Ascending aorta (tissue), 2 donors: ENCODE measurements at regions of chr16 and their contacts with region 1.

Region 1: DNA sequence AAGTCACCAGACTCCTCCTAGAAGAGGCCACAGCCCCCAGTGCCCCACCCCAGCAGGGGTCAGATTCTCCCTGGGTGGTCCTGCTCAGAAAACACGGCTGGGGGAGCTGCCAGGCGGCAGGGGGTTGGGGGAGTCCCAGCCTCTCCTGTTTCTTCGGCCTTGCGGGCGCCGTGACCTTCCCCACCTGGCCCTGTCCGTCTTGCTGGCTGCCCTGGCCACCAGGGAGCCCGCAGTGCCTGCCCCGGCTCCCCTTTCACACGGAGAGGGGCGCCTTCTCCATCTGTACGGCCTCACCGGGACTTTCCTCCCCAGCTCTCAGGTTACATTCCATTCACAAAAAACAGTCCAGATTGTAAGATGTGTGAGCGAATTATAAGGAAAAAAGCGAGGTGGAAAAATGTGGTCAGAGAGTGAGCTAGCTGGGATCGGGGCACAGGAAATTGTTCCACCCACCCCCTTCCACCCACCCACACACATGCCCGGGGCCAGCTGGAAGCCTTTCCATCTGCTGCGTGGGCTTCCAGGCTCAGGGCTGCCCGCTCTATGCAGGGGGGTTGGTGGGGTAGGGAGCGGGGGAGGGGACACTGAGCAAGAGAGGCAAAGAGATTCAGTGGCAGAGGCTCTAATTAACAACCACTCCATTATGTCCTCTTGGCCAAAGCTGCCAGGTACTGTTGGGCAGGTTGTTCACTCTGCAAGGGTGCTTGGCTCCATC is 14.6 kb upstream of the CIBAR2 start:
- DNase-seq: peak in 1 of 2 donors; percentile 90
- H3K4me3 ChIP-seq: peak overlapping the region in 1 of 2 donors; percentile 9
- H3K27ac ChIP-seq: peak overlapping the region; percentile 88 to 94
- H3K4me1 ChIP-seq: peaks cover 19 to 57% of the 10 kb centered on the region in 2 donors
- H3K27me3 ChIP-seq: no peaks in the 10 kb centered on the region
- CTCF ChIP-seq: no peak

Region 2: DNA sequence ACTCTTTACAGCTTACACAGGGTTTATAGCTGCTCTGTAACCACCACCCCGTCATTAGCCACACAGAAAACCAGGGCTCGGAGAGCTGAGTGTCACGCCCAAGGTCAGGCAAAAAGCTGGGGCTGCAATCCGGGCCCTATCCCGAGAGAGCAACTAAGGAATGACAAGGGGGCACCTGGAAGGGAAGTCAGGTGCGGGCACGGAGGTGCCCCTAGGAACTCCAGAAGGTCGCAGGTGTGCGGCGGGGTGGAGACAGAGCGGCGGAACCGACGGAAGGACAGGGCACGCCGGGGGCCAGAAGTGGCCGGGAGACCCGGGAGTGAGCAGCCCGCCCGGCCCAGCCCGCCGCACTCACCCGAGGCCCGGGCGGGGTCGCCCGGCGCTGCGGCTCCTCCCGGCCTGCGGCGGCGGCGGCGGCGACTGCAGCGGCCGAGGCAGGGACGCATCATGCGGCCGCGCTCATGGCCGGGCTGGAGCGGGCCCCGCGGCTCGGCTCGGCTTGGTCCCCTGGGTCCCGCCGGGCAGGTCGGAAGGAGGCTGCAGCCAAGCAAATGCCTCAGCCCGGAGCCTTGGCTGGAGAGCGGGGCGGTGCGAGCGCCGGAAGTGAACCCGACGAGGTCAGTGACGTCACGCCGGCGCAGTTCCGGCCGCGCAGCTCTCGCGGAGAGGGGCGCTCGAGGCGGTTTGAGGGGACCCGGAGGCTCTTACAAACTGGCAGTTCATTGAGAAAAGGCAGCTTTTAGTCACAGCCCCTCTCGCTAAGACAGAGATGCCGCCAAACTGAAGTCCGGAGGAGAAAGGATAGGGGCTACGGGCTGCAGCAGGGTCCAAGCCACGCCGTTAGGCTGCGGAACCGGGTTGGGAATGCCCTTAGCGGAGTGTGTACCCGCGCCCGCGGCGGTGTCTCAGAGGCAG is 115.7 kb before region 1 on chr16 and contains the start of gene ZDHHC7:
- intact Hi-C with region 1: no loop called
- DNase-seq: peak; percentile 27 to 93
- H3K4me3 ChIP-seq: peak within 1 kb of the TSS; percentile 95 to 98
- H3K27ac ChIP-seq: peak within 1 kb of the TSS; percentile 90 to 96
- H3K4me1 ChIP-seq: peaks cover 2 to 39% of the 10 kb centered on the region in 2 donors
- H3K27me3 ChIP-seq: no peaks in the 10 kb centered on the region
- CTCF ChIP-seq: no peak
- total RNA-seq, gene ZDHHC7: 70.7 TPM

Region 3: DNA sequence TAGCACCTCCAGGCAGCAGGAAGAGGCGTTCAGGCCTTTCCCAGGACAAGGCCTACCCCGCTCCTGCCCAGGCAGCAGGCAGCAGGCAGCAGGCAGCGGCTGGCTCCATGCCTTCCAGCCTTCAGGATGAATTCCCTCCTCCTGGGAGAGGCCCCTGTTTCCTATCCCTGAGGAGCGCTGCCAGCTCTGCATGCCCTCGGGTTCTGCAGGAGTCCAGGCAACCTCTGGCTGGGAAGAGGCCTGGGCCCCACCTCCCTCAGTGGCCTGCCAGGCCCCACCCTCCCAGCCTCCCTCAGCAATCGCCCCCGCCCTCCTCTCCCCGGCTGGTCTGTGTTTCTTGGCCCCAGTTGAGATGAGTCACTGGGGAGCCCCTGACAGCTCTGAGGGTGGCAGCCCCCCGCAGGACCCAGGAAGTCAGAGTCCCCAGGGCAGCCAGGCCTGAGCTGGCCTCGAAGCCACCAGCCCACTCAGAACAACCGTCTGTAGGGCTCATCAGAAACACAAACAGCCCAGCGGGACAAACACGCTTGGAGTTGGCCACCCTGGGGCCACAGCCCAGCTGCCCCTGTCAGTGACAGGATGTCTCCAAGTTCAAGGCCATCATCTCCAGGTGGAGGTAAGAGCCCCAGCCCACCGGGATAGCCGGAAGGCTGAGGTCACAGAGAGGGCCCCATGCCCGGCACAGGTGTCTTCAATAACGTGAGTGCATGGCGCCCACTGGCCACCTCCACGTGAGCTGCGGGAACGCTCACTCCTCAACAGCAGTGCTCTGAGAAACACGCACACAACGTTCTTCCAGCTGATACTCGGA is 24.9 kb after region 1 on chr16:
- intact Hi-C with region 1: loop called (anchors 2 kb)
- DNase-seq: peak; percentile 58 to 91
- H3K4me3 ChIP-seq: no peak overlapping the region
- H3K27ac ChIP-seq: peak overlapping the region; percentile 50 to 76
- H3K4me1 ChIP-seq: peaks cover 20 to 36% of the 10 kb centered on the region in 2 donors
- H3K27me3 ChIP-seq: no peaks in the 10 kb centered on the region
- CTCF ChIP-seq: no peak

Region 4: DNA sequence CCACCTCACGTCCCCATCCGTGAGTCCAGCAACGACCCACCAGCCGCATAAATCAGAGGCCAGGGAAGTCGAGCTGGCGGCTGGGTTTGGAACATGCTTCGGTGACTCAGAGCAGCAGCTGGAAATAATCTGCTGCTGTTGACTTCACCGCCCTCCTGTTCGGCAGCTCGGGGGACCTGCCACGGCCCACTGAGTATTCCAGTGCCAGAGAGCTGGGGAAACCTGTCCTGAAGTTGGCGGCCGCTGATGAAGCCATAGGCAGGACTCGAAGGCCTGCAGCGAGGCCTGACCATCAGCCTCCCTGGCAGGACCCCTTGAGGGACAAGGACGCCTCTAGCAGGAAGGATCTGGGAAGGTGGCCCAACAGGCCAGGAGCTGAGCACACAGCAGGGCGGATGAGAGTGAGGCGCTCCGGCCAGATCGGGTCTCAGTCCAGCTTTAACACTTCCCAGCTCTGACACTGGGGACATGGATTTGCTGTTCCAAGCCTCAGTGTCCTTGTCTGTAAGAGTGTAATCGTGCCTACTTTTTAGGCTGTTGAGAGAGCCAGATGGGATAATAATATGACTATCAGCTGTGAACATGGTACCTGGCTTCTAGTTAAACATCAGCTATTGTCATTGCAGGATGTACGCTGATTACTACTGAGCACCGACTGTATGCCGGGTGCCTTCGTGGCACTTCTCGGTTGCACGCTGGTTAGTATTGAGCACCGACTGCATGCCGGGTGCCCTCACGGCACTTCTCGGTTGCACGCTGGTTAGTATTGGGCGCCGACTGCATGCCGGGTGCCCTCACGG is 35.8 kb after region 1 on chr16:
- intact Hi-C with region 1: loop called (anchors 2 kb)
- DNase-seq: peak in 1 of 2 donors; percentile 89
- H3K4me3 ChIP-seq: no peak overlapping the region
- H3K27ac ChIP-seq: peak overlapping the region; percentile 66 to 84
- H3K4me1 ChIP-seq: peaks cover 4 to 42% of the 10 kb centered on the region in 2 donors
- H3K27me3 ChIP-seq: no peaks in the 10 kb centered on the region
- CTCF ChIP-seq: no peak

Region 5: DNA sequence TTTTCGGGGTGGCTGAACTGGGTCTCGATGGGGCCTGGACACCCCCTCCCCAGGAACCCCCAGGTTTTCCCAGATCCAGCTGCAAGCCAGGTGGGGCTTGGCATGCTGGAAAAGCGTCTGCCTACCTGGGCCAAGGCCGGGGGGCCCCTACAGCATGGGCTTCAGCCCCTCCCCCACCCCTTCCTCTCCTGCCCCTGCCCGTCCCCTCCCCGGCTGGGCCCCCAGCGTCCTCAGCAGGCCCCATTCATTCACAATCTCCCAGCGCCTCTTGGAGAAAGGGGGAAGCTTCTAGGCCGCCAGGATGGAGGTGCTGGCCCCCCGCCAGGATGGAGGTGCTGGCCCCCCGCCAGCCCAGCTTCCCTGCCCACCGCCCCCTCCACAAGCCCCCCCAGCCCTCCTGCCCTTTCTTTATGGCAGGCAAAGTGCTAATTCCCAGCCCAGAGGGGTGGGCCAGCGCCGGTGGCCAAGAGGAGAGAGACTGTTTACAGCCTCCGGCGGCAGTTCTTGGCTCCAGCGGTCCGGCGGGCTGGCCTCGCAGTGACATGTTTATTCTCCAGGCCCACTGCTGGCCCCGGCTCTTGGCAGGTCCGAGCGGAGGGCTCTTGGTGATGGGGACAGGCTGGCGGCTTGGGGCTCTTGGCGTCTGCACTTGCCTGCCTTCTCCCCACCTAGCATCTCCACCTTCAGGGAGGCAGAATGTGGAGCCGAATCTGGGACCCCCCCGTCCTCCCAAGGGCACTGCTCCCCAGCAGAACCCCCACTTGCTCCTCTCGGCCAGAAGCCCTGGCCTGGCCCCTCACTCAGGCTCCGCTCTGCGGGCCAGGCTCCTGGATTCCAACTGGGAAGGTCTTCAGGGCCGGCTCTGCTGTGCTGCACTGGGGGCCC is 79.9 kb after region 1 on chr16:
- intact Hi-C with region 1: loop called (anchors 2 kb)
- DNase-seq: peak in 1 of 2 donors; percentile 82
- H3K4me3 ChIP-seq: peak overlapping the region; percentile 33 to 38
- H3K27ac ChIP-seq: peak overlapping the region; percentile 63 to 77
- H3K4me1 ChIP-seq: peaks cover 35 to 70% of the 10 kb centered on the region in 2 donors
- H3K27me3 ChIP-seq: no peaks in the 10 kb centered on the region
- CTCF ChIP-seq: no peak

Region 6: DNA sequence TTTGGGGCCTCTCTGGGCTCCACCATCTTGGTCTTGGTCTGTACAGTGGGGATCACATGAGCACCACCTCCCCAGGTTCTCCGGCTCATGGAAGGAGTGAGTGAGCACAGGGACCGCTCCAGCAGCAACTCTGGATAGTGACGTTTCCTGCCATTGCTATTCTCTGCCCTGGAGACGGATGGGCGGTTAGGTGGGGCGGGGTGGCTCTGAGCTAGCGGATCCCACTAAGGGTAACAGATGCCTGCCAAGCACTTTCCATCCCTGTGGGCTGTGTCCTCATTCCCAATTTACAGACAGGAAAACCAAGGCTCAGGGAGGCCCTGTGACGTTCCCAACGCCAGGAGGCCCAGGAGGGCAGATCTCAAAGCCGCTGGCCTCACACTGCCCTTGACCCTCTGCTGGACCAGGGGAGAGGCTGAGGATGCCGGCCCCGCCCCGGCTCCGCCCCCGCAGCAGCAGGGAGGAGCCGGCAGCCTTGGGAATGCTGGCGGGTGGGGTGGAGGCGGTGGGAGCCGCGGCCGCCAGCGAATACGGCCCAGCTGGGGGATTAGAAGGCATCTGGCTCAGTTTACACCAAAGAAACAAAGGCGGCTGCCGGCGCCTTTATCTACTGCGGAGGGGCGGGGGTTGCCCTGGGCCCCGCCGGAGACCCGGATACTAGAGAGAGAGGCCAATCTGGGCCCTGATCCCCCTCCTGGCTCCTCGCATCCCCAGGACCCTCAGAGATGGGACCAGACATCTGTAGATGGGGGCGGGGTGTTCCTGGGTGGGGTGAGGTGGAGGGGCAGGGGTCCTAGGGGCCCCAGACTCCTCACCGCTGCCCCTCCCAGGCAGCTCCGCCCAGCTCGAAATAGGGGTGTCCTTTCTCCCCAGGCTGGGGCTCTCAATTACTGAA is 107.7 kb after region 1 on chr16:
- intact Hi-C with region 1: loop called (anchors 5 kb)
- DNase-seq: peak in 1 of 2 donors; percentile 79
- H3K4me3 ChIP-seq: peak overlapping the region; percentile 48 to 58
- H3K27ac ChIP-seq: peak overlapping the region; percentile 70 to 74
- H3K4me1 ChIP-seq: peaks cover 20 to 45% of the 10 kb centered on the region in 2 donors
- H3K27me3 ChIP-seq: no peaks in the 10 kb centered on the region
- CTCF ChIP-seq: no peak

Region 7: GRCh38 chr16:85514595-85515318 is 387.9 kb after region 1 on chr16:
- intact Hi-C with region 1: loop called (anchors 10 kb)
- DNase-seq: peak; percentile 35 to 93
- H3K4me3 ChIP-seq: peak overlapping the region in 1 of 2 donors; percentile 25
- H3K27ac ChIP-seq: peak overlapping the region; percentile 81 to 88
- H3K4me1 ChIP-seq: peaks cover 7 to 26% of the 10 kb centered on the region in 2 donors
- H3K27me3 ChIP-seq: no peaks in the 10 kb centered on the region
- CTCF ChIP-seq: peak in 2 of 3 experiments; percentile 22 to 25